AG04449 (cell line): ENCODE measurements at regions of chr16 and their contacts with region 1.

Region 1: GRCh38 chr16:3059000-3059722 is 6.3 kb upstream of the IL32 start:
- DNase-seq: peak; percentile 16
- H3K4me3 ChIP-seq: peak overlapping the region; percentile 81
- CTCF ChIP-seq: peak; percentile 91

Region 2: GRCh38 chr16:3045357-3045728 is 13.8 kb before region 1 on chr16:
- CTCF ChIA-PET with region 1: interaction called, 56 read pairs
- POLR2A ChIA-PET with region 1: no interaction called
- DNase-seq: no peak
- H3K4me3 ChIP-seq: peak overlapping the region; percentile 43
- CTCF ChIP-seq: no peak

Region 3: DNA sequence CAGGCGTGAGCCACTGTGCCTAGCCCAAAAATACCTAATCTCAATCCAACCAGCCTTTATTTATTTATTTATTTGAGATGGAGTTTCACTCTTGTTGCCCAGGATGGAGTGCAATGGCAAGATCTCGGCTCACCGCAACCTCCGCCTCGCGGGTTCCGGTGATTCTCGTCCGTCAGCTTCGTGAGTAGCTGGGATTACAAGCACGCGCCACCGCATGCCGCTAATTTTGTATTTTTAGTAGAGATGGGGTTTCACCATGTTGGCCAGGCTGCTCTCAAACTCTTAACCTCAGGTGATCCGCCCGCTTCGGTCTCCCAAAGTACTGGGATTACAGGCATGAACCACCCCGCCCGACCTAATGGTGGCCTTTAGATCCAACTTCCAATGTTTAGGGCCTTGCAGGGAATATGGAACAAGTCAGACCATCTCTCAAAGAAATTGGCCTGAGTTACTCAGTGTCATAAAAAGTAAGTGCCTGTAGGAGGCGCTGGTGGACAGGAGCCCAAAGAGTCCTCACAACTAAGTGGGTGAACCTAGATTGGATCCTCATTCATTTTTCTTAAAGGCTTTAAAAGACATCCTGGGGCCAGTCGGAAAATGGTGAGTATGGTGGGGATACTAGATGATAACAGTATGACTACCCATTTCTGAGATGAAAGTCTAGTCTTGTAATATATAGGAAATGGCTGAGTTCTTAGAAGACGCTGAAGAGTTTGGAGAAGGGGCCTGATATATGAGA is 35.3 kb after region 1 on chr16:
- CTCF ChIA-PET with region 1: interaction called, 10 read pairs
- POLR2A ChIA-PET with region 1: no interaction called
- DNase-seq: no peak
- H3K4me3 ChIP-seq: no peak overlapping the region
- CTCF ChIP-seq: peak; percentile 15

Region 4: DNA sequence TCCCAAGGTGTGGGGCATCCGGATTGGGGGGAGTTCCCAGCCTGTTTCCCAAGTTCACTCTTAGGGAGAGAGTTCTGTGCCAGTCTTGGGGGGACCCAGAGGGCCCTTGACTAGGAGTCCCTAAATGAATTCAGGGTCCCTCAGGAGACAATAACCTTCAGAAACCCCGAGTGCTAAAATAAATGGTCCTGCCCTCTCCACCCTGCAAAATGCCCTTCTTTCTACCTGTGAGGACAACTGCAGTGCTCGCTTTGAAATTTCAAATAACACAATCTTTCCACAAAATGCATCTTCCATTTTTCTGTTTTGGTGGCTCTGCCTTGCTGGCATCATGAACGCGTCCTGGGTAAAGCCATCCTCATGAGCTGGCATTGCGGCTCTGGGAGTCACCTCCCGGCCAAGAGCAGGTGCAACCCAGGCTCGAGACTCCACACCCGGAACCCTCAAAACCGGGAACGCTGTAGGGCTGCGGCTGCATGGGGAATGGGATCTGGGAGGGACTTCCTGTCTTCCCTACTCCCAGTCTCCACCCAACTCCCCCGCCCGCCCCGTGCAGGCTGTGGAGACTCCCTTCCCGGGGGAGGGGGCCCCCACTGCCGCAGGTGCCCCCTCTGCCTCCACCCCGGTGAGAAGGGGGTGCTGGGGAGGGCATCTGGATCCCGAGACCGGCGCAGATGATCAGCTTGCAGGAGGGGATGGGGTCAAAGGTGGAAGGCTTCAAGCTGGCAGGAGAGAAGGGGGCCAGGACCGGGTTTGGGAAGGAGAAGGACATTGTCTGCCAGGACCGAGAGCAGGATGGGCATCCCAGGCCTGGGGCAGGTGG is 53.1 kb after region 1 on chr16 and contains the start of gene ZNF205:
- CTCF ChIA-PET with region 1: interaction called, 20 read pairs
- POLR2A ChIA-PET with region 1: no interaction called
- DNase-seq: no peak
- H3K4me3 ChIP-seq: peak within 1 kb of the TSS; percentile 95
- CTCF ChIP-seq: no peak

Region 5: GRCh38 chr16:3129137-3130131 is 70.3 kb after region 1 on chr16:
- CTCF ChIA-PET with region 1: interaction called, 88 read pairs
- POLR2A ChIA-PET with region 1: interaction called, 4 read pairs
- DNase-seq: no peak
- H3K4me3 ChIP-seq: peak overlapping the region; percentile 48
- CTCF ChIP-seq: peak; percentile 86

Region 6: GRCh38 chr16:3173892-3174617 is 114.9 kb after region 1 on chr16:
- CTCF ChIA-PET with region 1: interaction called, 31 read pairs
- POLR2A ChIA-PET with region 1: no interaction called
- DNase-seq: no peak
- H3K4me3 ChIP-seq: peak overlapping the region; percentile 23; the same call in 1 of the 2 replicates
- CTCF ChIP-seq: peak; percentile 37

Region 7: DNA sequence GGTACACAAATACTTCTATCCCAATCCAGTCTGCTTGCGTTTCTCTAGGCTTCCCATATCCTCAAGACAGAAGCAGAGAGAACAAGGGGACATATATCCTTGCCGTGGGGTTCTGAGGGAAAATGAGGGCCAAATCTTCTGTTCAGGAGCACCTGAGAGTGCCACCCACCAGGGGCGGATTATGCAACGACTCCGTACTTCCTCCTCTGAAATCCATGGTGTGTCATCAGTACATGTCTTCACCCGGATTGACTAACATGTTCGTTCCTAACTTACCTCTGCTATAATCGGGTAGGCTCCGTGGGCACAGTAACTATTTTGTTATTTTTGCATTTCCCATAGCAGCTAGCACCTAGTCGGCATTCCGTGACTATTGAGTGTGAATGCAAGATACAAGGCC is 183.5 kb after region 1 on chr16:
- CTCF ChIA-PET with region 1: no interaction called
- POLR2A ChIA-PET with region 1: no interaction called
- DNase-seq: no peak
- H3K4me3 ChIP-seq: no peak overlapping the region
- CTCF ChIP-seq: no peak